ENCODE measurements at regions of chr2 and their contacts with region 1.

Region 1: DNA sequence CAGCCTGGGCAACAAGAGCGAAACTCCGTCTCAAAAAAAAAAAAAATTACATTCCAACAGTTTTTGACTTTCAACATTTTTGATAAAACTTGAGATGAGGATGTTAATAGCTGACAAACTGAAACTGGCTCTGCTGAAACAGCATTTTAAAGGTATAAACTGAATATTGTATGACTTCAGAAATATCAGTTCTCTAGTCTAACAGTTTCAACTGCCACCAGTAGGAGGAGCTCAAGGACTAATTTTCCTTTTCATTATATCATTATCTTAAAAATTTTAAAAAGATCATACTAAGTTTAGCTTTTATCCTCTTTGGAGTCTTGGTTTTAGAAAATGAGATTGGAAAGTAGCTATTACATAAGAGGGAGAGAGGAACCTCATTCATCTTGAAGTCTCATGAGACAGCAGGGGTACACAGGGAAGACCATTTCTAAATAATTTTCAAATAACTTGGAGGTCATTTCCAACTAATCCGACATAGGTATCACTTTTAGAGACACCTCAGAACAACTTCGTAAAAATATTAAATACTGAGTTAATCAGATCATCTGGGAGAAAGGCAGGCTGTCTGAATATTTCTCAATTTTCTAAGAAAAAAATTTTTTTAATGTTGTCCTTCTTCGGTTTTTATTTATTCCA is 37.6 kb upstream of the MCM6 start:
- DNase-seq: peak; percentile 75
- ATAC-seq: no peak
- H3K4me3 Mint-ChIP-seq: no peak overlapping the region
- H3K27ac Mint-ChIP-seq: no peak overlapping the region
- H3K4me1 Mint-ChIP-seq: peaks cover 14% of the 10 kb centered on the region
- H3K27me3 Mint-ChIP-seq: no peaks in the 10 kb centered on the region

Region 2: GRCh38 chr2:135756692-135757091 is 157.2 kb before region 1 on chr2:
- CTCF ChIA-PET with region 1: no interaction called
- POLR2A ChIA-PET with region 1: no interaction called
- DNase-seq: no peak
- ATAC-seq: no peak
- H3K4me3 Mint-ChIP-seq: no peak overlapping the region
- H3K27ac Mint-ChIP-seq: no peak overlapping the region
- H3K4me1 Mint-ChIP-seq: no peaks in the 10 kb centered on the region
- H3K27me3 Mint-ChIP-seq: no peaks in the 10 kb centered on the region

Region 3: GRCh38 chr2:135885709-135886108 is 28.1 kb before region 1 on chr2:
- CTCF ChIA-PET with region 1: interaction called, 11 read pairs
- POLR2A ChIA-PET with region 1: no interaction called
- DNase-seq: no peak
- ATAC-seq: no peak
- H3K4me3 Mint-ChIP-seq: no peak overlapping the region
- H3K27ac Mint-ChIP-seq: no peak overlapping the region
- H3K4me1 Mint-ChIP-seq: peaks cover 14% of the 10 kb centered on the region
- H3K27me3 Mint-ChIP-seq: peaks cover 18% of the 10 kb centered on the region

Region 4: GRCh38 chr2:135931776-135932443 is 18.1 kb after region 1 on chr2:
- CTCF ChIA-PET with region 1: interaction called, 15 read pairs
- POLR2A ChIA-PET with region 1: no interaction called
- DNase-seq: no peak
- ATAC-seq: peak; percentile 65
- H3K4me3 Mint-ChIP-seq: peak overlapping the region; percentile 20
- H3K27ac Mint-ChIP-seq: peak overlapping the region; percentile 89
- H3K4me1 Mint-ChIP-seq: peaks cover 52% of the 10 kb centered on the region
- H3K27me3 Mint-ChIP-seq: no peaks in the 10 kb centered on the region

Region 5: DNA sequence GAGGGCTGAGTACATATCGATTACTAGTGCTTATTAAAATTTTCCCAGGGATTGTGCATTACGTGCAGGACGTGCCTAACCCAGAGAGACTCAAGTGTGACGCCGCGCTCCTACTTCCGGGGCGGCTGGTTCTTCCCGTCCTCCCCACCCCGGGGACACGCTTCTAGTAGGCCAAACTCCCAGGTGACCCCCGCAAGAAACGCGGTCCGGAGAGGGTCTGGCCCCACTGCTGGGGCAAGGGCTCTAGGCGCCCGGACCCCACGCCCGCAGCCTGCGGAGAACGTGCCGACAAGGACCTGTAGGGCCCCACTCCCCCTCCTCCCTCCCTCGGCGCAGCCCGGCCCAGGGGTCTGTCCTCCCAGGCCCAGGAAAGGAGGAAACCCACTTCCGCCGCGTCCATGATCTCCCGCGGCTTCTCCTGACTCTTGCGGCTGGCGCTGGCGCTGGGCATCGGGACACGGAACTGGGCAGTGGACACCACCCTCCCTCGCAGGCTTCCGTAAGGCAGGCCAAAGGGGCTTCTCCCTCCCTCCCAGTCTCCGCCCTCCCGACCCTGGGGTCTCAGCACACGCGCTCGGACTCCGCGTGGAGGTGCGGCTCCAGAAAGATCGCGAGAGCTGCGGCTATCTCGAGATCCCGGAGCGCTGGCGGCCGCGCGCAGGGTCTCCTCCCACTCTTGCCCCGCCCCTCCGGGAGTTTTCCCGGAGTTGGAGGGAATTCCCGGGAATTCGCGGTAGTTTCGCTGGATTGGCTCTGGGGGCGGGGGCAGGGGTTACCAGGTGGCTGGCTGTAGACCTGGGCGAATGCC is 71.4 kb after region 1 on chr2 and contains the start of gene DARS1:
- CTCF ChIA-PET with region 1: interaction called, 10 read pairs
- POLR2A ChIA-PET with region 1: no interaction called
- DNase-seq: peak; percentile 89
- ATAC-seq: peak; percentile 86
- H3K4me3 Mint-ChIP-seq: peak within 1 kb of the TSS; percentile 89
- H3K27ac Mint-ChIP-seq: peak within 1 kb of the TSS; percentile 98
- H3K4me1 Mint-ChIP-seq: peaks cover 55% of the 10 kb centered on the region
- H3K27me3 Mint-ChIP-seq: no peaks in the 10 kb centered on the region
- total RNA-seq, gene DARS1: 139 to 148 TPM

Region 6: GRCh38 chr2:136135921-136136906 is 222.4 kb after region 1 on chr2:
- CTCF ChIA-PET with region 1: interaction called, 10 read pairs
- POLR2A ChIA-PET with region 1: interaction called, 3 read pairs
- DNase-seq: peak; percentile 86
- ATAC-seq: peak; percentile 71
- H3K4me3 Mint-ChIP-seq: peak overlapping the region; percentile 44
- H3K27ac Mint-ChIP-seq: peak overlapping the region; percentile 95
- H3K4me1 Mint-ChIP-seq: peaks cover 91% of the 10 kb centered on the region
- H3K27me3 Mint-ChIP-seq: peaks cover 11% of the 10 kb centered on the region

Region 7: DNA sequence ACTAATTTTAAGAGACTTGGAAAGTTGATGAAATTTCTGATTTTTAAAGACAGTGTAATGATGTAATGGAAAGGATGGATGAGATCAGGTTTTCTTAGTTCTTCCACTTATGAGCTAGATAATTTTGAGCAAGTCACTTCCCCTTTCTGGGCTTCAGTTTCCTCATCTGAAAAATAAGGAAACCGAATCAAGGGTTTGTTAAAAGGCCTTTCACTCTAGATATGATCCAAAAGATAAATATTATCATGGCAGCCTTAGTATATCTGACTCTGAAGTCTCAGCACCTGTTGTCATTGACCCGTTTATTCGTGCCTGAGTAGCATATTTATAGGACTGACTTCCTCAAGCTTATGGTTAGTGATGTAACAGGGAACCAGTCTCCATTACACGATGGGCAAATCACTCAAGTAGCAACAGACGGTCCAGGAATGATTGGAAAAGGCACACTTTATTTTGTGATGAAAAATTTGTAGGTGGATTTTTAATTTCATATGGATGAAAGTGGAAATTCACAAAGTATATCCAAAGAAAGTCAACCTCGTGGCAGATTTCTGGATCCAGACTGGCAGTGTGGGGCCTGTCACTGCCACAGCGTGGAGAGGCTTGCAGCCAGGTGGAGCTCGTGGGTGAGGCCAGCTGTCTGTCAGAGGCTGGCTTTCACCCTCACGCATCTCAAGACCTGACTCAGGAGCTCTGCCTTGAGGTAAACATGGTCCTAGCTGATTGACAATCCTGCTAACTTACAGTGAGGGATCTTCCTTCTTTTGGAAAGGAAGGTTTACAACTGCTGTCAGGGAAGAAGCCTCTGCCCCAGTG is 342.0 kb after region 1 on chr2:
- CTCF ChIA-PET with region 1: interaction called, 10 read pairs
- POLR2A ChIA-PET with region 1: no interaction called
- DNase-seq: no peak
- ATAC-seq: no peak
- H3K4me3 Mint-ChIP-seq: no peak overlapping the region
- H3K27ac Mint-ChIP-seq: no peak overlapping the region
- H3K4me1 Mint-ChIP-seq: peaks cover 18% of the 10 kb centered on the region
- H3K27me3 Mint-ChIP-seq: peaks cover 7% of the 10 kb centered on the region